ENCODE measurements at regions of chrX and their contacts with region 1.

Region 1: GRCh38 chrX:48917139-48918001 is 1.5 kb downstream of the PIM2 start:
- DNase-seq: peak; percentile 96
- H3K4me3 Mint-ChIP-seq: peak overlapping the region; percentile 96
- H3K27ac Mint-ChIP-seq: peak overlapping the region; percentile 95
- H3K4me1 Mint-ChIP-seq: peaks cover 32% of the 10 kb centered on the region
- H3K27me3 Mint-ChIP-seq: no peaks in the 10 kb centered on the region

Region 2: GRCh38 chrX:48801280-48802088 is 115.9 kb before region 1 on chrX and contains the start of gene HDAC6:
- intact Hi-C with region 1: loop called (anchors 5 kb)
- DNase-seq: peak; percentile 98
- H3K4me3 Mint-ChIP-seq: peak within 1 kb of the TSS; percentile 96
- H3K27ac Mint-ChIP-seq: peak within 1 kb of the TSS; percentile 96
- H3K4me1 Mint-ChIP-seq: peaks cover 16% of the 10 kb centered on the region
- H3K27me3 Mint-ChIP-seq: no peaks in the 10 kb centered on the region
- total RNA-seq, gene HDAC6: 50.6 and 55.2 TPM in 2 replicates

Region 3: DNA sequence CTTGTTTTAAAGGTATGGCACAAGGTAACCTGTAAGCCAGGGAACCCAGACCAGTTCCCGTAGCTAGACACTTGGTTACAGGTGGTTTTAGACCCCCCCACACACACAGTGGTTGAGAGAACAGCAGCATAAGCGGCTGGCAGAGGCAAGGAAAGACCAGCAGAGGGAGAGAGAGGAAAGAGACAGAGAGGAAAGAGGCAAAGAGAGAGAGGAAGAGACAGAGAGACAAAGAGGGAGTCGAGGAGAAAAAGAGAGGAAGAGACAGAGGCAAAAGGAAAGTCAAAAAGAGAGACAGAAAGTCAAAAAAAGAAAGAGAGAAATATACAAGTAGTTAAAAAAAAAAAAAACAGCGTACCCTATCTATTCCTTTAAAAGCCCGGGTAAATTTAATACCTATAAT is 62.5 kb before region 1 on chrX:
- intact Hi-C with region 1: no loop called
- DNase-seq: peak; percentile 59
- H3K4me3 Mint-ChIP-seq: no peak overlapping the region
- H3K27ac Mint-ChIP-seq: no peak overlapping the region
- H3K4me1 Mint-ChIP-seq: peaks cover 4% of the 10 kb centered on the region
- H3K27me3 Mint-ChIP-seq: peaks cover 12% of the 10 kb centered on the region

Region 4: DNA sequence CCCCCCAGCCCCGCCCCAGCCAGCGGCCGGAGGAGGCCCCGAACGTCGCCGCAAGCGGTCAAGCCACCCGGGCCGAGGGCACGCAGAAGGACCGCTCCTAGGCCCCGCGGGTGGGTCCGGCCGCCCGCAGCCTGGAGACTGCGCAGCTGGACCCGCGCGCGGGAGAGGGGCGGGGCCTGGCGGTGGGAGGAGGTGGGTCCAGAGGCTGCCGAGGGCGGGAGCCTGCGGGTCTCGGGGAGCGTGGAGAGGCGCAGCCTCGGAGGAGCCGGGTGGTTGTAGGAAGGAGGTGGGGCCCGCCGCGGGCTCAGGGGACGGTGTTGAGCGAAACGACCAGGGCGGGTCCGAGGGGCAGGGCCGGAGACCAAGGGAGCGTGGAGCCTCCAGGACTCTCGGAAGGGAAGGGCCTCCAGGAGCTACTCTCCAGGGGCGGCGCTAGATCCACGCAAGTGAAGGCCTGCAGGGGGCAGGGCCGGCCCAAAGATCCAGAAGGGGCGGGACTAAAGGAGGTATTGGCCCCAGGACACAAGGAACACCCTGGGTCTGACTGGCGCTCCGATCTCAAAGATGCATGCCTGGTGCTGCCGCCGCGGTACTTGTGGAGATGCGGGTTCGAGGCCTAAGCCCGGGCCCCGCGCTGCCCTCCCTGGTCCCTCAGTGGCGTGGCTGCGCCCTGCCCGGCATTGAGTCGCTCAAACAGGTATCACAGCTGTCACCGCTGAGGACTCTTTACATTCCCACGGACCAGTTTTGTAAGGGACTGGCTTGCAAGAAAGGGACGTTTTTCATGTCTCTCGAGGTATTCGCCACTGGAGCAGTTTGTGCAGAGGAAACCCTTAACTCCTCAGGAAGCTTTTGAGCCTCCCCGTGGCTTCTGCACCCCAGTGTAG is 25.7 kb before region 1 on chrX:
- intact Hi-C with region 1: no loop called
- DNase-seq: peak; percentile 93
- H3K4me3 Mint-ChIP-seq: peak overlapping the region; percentile 88
- H3K27ac Mint-ChIP-seq: peak overlapping the region; percentile 25
- H3K4me1 Mint-ChIP-seq: peaks cover 23% of the 10 kb centered on the region
- H3K27me3 Mint-ChIP-seq: no peaks in the 10 kb centered on the region

Region 5: GRCh38 chrX:48937054-48937907 is 19.9 kb after region 1 on chrX:
- intact Hi-C with region 1: loop called (anchors 1 kb)
- DNase-seq: peak; percentile 96
- H3K4me3 Mint-ChIP-seq: peak overlapping the region; percentile 82
- H3K27ac Mint-ChIP-seq: peak overlapping the region; percentile 96
- H3K4me1 Mint-ChIP-seq: peaks cover 72% of the 10 kb centered on the region
- H3K27me3 Mint-ChIP-seq: no peaks in the 10 kb centered on the region

Region 6: DNA sequence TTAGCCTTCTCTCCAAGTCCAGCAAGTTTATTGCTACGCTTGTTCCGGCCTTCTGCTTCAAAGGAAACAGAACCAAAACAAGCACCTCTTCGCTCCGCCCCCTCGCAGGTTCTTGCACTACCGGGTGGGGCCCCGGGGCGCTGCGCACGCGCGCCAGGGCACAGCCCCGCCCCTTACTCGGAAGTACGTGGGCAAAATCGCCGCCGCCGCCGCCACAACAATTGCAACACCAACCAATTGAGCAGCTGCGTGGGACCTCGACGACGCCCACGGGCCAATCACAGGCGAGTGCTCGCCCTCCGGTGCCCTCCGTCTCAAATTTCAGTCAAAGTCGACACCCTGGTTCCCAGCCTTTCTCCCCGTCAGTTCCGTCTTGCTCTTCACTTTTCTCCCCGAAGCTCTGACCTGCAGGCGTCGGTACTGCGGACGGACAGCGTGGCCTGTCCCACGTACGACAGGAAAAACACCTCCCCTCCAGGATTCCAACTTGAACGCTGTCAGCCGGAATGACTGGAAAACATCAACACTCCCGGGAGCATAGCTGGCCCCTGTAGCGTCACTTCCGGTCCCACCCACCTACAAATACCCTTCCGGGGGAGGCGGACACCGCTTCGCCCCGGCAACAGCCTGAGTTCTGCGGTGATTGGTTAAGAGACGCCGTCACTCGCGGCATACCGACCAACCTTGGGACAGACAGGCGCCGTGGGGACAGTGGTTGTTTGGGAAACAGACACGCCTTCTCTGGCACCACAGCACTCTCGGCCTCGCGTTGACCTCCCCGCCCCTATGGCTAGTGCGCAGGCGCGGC is 40.7 kb after region 1 on chrX:
- intact Hi-C with region 1: loop called (anchors 1 kb)
- DNase-seq: peak; percentile 97
- H3K4me3 Mint-ChIP-seq: peak overlapping the region; percentile 98
- H3K27ac Mint-ChIP-seq: peak overlapping the region; percentile 100
- H3K4me1 Mint-ChIP-seq: peaks cover 36% of the 10 kb centered on the region
- H3K27me3 Mint-ChIP-seq: no peaks in the 10 kb centered on the region

Measured in activated CD4-positive, alpha-beta T cell treated with anti-CD3 and anti-CD28 coated beads, Interleukin-2, amount 10 ng/mL, durations not matched to agents 24 days and 14 days (primary cell).